Panc1 (cell line): ENCODE measurements at regions of chr6 and their contacts with region 1.

Region 1: DNA sequence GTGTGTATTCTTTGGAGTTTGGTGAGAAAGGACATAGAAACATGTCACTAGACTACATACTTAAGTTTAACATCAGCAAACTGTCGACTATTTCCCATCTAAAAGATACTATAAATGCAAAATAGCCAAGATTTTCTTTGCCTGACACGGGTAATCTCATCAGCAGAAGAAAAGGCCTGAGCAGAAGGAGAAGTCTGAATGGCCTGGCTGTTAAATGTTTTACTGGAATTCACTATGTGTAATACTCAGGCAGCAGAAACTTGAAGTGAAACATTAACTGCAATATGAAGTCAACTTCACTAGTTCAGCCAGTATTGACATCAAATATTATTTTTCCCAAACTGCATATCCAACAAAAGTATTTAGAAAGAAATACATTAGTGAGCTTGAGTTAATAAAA is 6.4 kb upstream of the DSE start:
- DNase-seq: no peak
- ATAC-seq: no peak
- H3K4me3 ChIP-seq: no peak overlapping the region
- H3K27ac ChIP-seq: no peak overlapping the region
- H3K4me1 ChIP-seq: no peaks in the 10 kb centered on the region
- H3K27me3 ChIP-seq: peaks cover 33% of the 10 kb centered on the region
- CTCF ChIP-seq: no peak

Region 2: GRCh38 chr6:116542426-116542825 is 178.1 kb after region 1 on chr6:
- CTCF ChIA-PET with region 1: interaction called, 16 read pairs
- POLR2A ChIA-PET with region 1: no interaction called
- in situ Hi-C with region 1: no loop called
- intact Hi-C with region 1: no loop called
- DNase-seq: no peak
- ATAC-seq: no peak
- H3K4me3 ChIP-seq: no peak overlapping the region
- H3K27ac ChIP-seq: no peak overlapping the region
- H3K4me1 ChIP-seq: no peaks in the 10 kb centered on the region
- H3K27me3 ChIP-seq: peaks cover 60% of the 10 kb centered on the region
- CTCF ChIP-seq: no peak